CD14-positive monocyte (primary cell): ENCODE measurements at regions of chr4 and their contacts with region 1.

Region 1: GRCh38 chr4:26410385-26411293 is 79.6 kb downstream of the CCKAR start:
- DNase-seq: peak; percentile 25 to 62 (median 31)
- H3K4me3 ChIP-seq: no peak overlapping the region
- H3K4me3 Mint-ChIP-seq: no peak overlapping the region
- H3K27ac ChIP-seq: no peak overlapping the region
- H3K27ac Mint-ChIP-seq: peak overlapping the region in 1 of 7 donors; percentile 76
- H3K4me1 ChIP-seq: peaks cover 4 to 12% of the 10 kb centered on the region in 2 donors
- H3K4me1 Mint-ChIP-seq: peaks cover 7% of the 10 kb centered on the region
- H3K27me3 ChIP-seq: no peaks in the 10 kb centered on the region
- H3K27me3 Mint-ChIP-seq: no peaks in the 10 kb centered on the region
- CTCF ChIP-seq: peak; percentile 85

Region 2: GRCh38 chr4:25986807-25987206 is 423.8 kb before region 1 on chr4:
- intact Hi-C with region 1: loop called (anchors 2 to 5 kb)
- DNase-seq: no peak
- H3K4me3 ChIP-seq: no peak overlapping the region
- H3K4me3 Mint-ChIP-seq: no peak overlapping the region
- H3K27ac ChIP-seq: no peak overlapping the region
- H3K27ac Mint-ChIP-seq: no peak overlapping the region
- H3K4me1 ChIP-seq: peaks cover 0 to 3% of the 10 kb centered on the region in 2 donors
- H3K4me1 Mint-ChIP-seq: peaks cover 13% of the 10 kb centered on the region
- H3K27me3 ChIP-seq: no peaks in the 10 kb centered on the region
- H3K27me3 Mint-ChIP-seq: peaks cover 1 to 2% (median 2%) of the 10 kb centered on the region in 3 donors
- CTCF ChIP-seq: no peak

Region 3: GRCh38 chr4:25993395-25994185 is 417.0 kb before region 1 on chr4:
- intact Hi-C with region 1: loop called (anchors 2 to 5 kb)
- DNase-seq: peak in 1 of 3 donors; percentile 72
- H3K4me3 ChIP-seq: no peak overlapping the region
- H3K4me3 Mint-ChIP-seq: no peak overlapping the region
- H3K27ac ChIP-seq: no peak overlapping the region
- H3K27ac Mint-ChIP-seq: peak overlapping the region in 3 of 7 donors; percentile 20 to 50 (median 36)
- H3K4me1 ChIP-seq: no peaks in the 10 kb centered on the region
- H3K4me1 Mint-ChIP-seq: peaks cover 4% of the 10 kb centered on the region
- H3K27me3 ChIP-seq: no peaks in the 10 kb centered on the region
- H3K27me3 Mint-ChIP-seq: peaks cover 0 to 1% (median 0%) of the 10 kb centered on the region in 3 donors
- CTCF ChIP-seq: peak; percentile 18

Region 4: GRCh38 chr4:26028793-26029567 is 381.7 kb before region 1 on chr4:
- intact Hi-C with region 1: loop called (anchors 2 to 5 kb)
- DNase-seq: peak; percentile 43 to 63 (median 48)
- H3K4me3 ChIP-seq: no peak overlapping the region
- H3K4me3 Mint-ChIP-seq: peak overlapping the region; percentile 4 to 36
- H3K27ac ChIP-seq: no peak overlapping the region
- H3K27ac Mint-ChIP-seq: peak overlapping the region in 2 of 7 donors; percentile 8 to 62
- H3K4me1 ChIP-seq: no peaks in the 10 kb centered on the region
- H3K4me1 Mint-ChIP-seq: peaks cover 7% of the 10 kb centered on the region
- H3K27me3 ChIP-seq: peaks cover 4 to 17% of the 10 kb centered on the region in 2 donors
- H3K27me3 Mint-ChIP-seq: peaks cover 23 to 36% (median 35%) of the 10 kb centered on the region in 3 donors
- CTCF ChIP-seq: peak; percentile 76

Region 5: DNA sequence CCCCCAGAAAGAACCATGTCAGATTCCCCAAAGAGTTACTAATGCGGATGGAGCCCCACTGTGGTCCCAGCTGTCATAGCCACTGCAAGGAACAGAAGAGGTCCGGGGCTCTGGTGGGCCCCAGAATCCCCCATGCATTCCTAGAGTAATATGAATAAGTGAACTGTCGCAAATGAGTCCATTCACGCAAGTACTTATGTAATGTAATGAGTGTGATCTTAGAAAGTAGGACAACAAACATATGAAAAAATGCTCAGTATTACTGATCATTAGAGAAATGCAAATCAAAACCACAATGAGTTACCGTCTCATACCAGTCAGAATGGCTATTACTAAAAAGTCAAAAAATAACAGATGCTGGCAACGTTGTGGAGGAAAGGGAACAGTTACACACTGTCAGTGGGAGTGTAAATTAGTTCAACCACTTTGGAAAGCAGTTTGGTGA is 231.3 kb before region 1 on chr4:
- intact Hi-C with region 1: no loop called
- DNase-seq: no peak
- H3K4me3 ChIP-seq: no peak overlapping the region
- H3K4me3 Mint-ChIP-seq: no peak overlapping the region
- H3K27ac ChIP-seq: no peak overlapping the region
- H3K27ac Mint-ChIP-seq: no peak overlapping the region
- H3K4me1 ChIP-seq: no peaks in the 10 kb centered on the region
- H3K4me1 Mint-ChIP-seq: no peaks in the 10 kb centered on the region
- H3K27me3 ChIP-seq: no peaks in the 10 kb centered on the region
- H3K27me3 Mint-ChIP-seq: peaks cover 2 to 11% (median 5%) of the 10 kb centered on the region in 3 donors
- CTCF ChIP-seq: no peak

Region 6: GRCh38 chr4:27293831-27294230 is 883.2 kb after region 1 on chr4:
- intact Hi-C with region 1: no loop called
- DNase-seq: no peak
- H3K4me3 ChIP-seq: no peak overlapping the region
- H3K4me3 Mint-ChIP-seq: no peak overlapping the region
- H3K27ac ChIP-seq: no peak overlapping the region
- H3K27ac Mint-ChIP-seq: no peak overlapping the region
- H3K4me1 ChIP-seq: no peaks in the 10 kb centered on the region
- H3K4me1 Mint-ChIP-seq: no peaks in the 10 kb centered on the region
- H3K27me3 ChIP-seq: no peaks in the 10 kb centered on the region
- H3K27me3 Mint-ChIP-seq: no peaks in the 10 kb centered on the region
- CTCF ChIP-seq: no peak